Dorsolateral prefrontal cortex (tissue), 120 donors: ENCODE measurements at regions of chr7 and their contacts with region 1.

Region 1: GRCh38 chr7:151304856-151305255 is 36.8 kb upstream of the NUB1 start:
- DNase-seq: no peak
- H3K4me3 ChIP-seq: peak overlapping the region in 1 of 59 donors; percentile 28
- H3K27ac ChIP-seq: no peak overlapping the region
- H3K27me3 ChIP-seq: peaks cover 0 to 42% (median 4%) of the 10 kb centered on the region in 45 donors
- CTCF ChIP-seq: no peak

Region 2: DNA sequence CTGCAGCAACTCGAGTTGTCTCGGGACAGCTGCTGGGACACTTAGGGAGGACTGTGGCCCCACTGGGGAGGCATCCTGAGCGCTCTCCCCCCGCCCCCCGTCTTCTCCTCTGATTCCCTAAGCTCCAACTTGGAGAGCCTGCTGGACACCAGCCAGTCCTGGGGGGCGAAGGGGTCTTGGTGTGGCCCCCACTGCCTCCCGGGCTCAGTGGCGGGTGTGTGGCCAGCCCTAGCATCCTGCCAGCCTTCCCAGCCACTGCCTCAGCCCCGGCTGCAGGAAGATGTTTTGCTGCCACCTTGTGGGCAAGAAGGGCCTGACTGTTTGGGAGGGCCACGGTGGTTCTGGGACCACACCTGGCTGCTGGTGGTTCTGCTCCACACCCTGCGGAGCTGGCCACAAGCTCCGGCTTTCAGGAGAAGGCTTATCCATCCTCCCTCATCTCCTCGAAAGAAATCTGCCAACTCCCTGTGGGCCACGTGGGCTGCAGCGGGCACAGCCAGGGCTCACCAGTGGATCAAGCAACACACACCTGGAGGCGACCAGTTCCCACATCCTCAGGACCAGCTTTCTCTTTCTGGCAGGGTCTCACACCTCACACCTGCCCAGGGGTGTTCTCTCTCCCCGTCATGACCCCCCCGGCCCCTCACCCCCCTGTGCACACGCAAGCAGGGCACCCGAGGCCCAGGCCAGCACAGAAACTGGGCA is 193.8 kb before region 1 on chr7:
- intact Hi-C with region 1: no loop called
- DNase-seq: peak; percentile 65 to 86 (median 77)
- H3K4me3 ChIP-seq: peak overlapping the region in 5 of 59 donors; percentile 7 to 29 (median 10)
- H3K27ac ChIP-seq: peak overlapping the region in 7 of 59 donors; percentile 2 to 44 (median 16)
- H3K27me3 ChIP-seq: no peaks in the 10 kb centered on the region
- CTCF ChIP-seq: peak; percentile 63 to 96 (median 91)

Region 3: GRCh38 chr7:151123822-151124464 is 180.9 kb before region 1 on chr7:
- intact Hi-C with region 1: loop called (anchors 2 to 10 kb)
- DNase-seq: peak; percentile 73 to 93 (median 86)
- H3K4me3 ChIP-seq: no peak overlapping the region
- H3K27ac ChIP-seq: peak overlapping the region in 14 of 59 donors; percentile 4 to 55 (median 22)
- H3K27me3 ChIP-seq: no peaks in the 10 kb centered on the region
- CTCF ChIP-seq: peak; percentile 83 to 100 (median 99)

Region 4: DNA sequence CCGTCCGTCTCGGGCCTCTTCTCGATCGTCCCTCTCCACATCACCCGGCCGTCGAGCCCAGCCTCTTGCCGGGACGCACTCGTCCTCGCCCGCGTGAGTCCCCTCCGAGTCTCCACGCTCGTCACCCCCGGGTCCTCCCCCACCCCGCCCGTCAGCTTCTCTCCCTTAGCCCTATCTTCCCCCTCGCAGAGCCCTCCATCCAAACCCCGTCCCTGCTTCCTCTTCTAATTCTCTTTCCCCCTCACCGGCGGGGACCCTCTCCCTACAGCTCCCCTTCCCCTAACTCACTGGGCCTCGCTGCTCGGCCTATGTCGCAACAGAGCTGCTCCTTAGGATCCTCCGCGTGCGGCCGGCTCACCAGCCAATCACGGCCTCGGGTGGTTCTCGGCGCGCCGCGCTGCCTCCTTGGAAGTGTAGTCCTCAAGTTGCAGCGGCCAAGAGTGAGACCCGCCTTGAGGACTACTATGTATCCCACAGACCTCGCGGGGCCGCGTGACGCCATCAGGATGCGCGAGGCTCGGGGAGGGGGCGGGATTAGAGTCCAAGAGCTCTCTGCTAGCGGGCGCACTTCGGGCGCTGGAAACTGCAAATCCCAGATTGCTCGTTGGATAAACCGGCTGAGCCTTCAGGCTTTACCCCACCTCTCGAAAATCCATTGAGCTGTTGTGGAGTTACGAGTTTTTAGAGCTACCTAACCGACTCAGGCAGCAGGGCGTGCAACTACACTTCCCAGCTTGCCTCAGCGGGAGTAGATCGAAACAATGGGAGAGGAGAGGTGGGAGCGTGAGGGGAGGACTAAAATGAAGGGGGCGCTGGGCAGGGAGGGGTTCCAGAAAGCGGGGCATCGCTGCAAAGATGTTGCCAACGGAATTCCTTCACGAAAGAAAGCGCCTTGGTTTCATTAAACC is 77.7 kb before region 1 on chr7 and contains the start of gene ABCF2:
- intact Hi-C with region 1: loop called in 1 of 2 experiments (anchors 5 kb)
- DNase-seq: peak; percentile 98 to 100 (median 100)
- H3K4me3 ChIP-seq: peak within 1 kb of the TSS; percentile 63 to 98 (median 92)
- H3K27ac ChIP-seq: peak within 1 kb of the TSS in 58 of 59 donors; percentile 7 to 91 (median 82)
- H3K27me3 ChIP-seq: no peaks in the 10 kb centered on the region
- CTCF ChIP-seq: peak in 41 of 56 donors; percentile 3 to 64 (median 36)
- total RNA-seq, gene ABCF2: 21.6 to 63.3 (median 47.2) TPM

Region 5: DNA sequence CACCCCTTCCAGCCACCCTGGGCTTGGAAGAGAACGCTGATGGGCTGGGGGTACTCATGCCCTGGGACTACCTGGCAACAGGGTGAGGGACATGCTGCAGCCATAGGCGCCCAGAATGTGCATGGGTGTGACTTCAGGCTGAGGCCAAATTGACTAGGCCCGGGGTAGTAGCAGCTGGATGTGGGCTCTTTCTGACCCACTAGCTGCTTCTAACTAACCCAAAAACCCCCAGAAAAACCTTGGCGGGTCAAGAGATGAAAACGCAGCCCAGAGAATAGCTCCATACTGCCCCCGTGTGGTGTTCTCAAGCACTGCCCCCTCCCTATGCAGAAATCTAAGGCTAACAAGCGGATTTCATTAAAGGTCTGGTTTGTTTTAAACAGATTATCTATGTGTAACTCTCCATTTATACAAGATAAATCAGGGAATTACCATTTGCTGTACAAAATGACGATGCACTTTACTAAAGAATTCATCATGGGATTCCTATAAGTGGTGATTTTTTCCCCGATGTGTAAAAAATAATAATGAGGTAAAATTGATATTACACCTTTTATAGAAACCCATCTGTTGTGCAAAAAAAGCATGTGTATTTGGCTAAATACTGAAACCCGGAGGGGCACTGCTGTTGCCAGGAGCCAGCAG is 60.5 kb before region 1 on chr7:
- intact Hi-C with region 1: loop called in 1 of 2 experiments (anchors 2 kb)
- DNase-seq: peak in 6 of 10 donors; percentile 45 to 74 (median 66)
- H3K4me3 ChIP-seq: peak overlapping the region in 29 of 59 donors; percentile 4 to 61 (median 49)
- H3K27ac ChIP-seq: peak overlapping the region in 35 of 59 donors; percentile 0 to 75 (median 51)
- H3K27me3 ChIP-seq: no peaks in the 10 kb centered on the region
- CTCF ChIP-seq: peak; percentile 68 to 93 (median 86)

Region 6: GRCh38 chr7:151398446-151399304 is 93.8 kb after region 1 on chr7:
- intact Hi-C with region 1: no loop called
- DNase-seq: no peak
- H3K4me3 ChIP-seq: no peak overlapping the region
- H3K27ac ChIP-seq: no peak overlapping the region
- H3K27me3 ChIP-seq: peaks cover 0 to 4% (median 0%) of the 10 kb centered on the region in 45 donors
- CTCF ChIP-seq: no peak